ENCODE measurements at regions of chr11 and their contacts with region 1.

Region 1: DNA sequence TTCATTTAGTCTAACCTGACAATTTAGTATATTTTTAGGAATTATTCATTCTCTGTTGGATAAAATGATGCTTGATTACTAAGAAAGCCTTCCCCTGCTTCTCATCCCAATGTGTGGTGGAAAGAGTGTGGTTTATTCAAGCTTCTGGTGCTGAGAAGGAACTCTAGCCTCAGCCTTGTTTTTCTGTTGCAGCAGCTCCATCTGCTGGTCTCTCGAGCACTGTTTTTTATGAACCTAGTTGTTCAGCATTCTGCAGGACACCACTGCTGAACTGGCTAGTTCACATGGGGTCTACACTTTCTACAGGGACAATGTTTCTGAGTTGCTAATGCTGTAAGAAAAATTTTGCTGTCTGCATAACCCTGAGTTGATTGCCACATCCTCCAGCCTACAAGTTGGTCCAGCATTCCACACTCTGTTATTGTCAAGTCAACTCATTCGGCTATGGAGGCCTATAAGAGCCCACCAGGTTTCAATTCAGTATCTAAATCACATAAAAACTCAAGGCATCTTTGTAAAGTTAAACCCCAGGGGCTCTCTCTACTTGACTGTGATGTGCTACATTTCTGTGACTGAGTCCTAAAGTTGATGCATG is 14.3 kb downstream of the OR2AG2 start:
- DNase-seq: peak; percentile 70 to 78 (median 71)
- H3K4me3 ChIP-seq: no peak overlapping the region
- H3K27ac ChIP-seq: no peak overlapping the region
- H3K4me1 ChIP-seq: no peaks in the 10 kb centered on the region
- H3K27me3 ChIP-seq: no peaks in the 10 kb centered on the region

Region 2: DNA sequence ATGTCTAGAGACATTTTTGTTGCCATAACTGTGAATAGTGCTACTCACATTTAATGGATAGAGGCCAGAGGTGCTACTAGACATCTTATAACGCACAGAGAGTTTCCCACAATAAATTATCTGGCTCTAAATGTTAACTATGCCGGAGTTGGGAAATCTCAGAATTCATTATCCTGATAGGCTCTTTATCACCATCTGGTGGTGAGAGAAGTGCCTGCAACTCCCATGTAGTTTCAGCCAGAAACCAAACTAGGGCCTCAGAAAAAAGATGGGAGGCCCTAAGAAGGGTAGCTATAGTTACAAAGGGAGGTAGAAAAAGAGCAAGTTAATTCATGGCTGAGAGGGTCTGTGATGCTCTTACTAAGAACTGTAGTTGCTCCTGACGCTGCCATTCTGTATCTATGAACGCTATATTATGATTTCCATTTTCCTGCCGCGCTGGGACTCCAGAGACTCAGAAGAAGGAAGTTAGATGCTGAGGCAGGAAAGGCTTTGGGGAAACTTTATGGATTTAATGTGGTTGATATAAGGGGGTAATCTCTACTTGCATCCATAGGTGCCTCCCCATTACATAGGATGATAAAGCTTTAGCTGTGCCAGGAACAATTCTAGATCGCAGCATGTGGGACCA is 51.5 kb before region 1 on chr11:
- CTCF ChIA-PET with region 1: interaction called, 81 read pairs
- POLR2A ChIA-PET with region 1: no interaction called
- DNase-seq: peak; percentile 43 to 68 (median 57)
- H3K4me3 ChIP-seq: no peak overlapping the region
- H3K27ac ChIP-seq: no peak overlapping the region
- H3K4me1 ChIP-seq: peaks cover 0 to 2% (median 0%) of the 10 kb centered on the region in 4 experiments
- H3K27me3 ChIP-seq: no peaks in the 10 kb centered on the region

Region 3: DNA sequence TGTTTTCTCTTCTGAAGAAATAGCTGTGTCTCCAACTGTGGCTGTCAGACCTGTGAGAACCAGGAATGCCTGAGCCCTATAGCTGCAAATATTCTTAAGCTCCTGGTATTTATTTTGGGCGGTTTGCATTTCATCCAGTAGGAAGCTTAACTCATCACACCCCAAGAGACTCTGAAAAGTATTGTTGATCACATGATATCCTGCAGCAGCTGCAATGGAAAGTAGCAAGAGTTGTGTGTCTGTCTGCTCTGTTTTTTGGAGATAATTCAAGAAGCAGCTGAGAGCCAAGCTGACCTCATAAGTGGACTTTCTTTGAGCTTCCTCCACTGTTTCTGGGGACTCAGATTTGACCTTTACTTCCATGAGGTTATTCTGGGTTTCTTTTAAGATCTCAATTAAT is 37.9 kb before region 1 on chr11:
- CTCF ChIA-PET with region 1: interaction called, 24 read pairs
- POLR2A ChIA-PET with region 1: no interaction called
- DNase-seq: no peak
- H3K4me3 ChIP-seq: no peak overlapping the region
- H3K27ac ChIP-seq: no peak overlapping the region
- H3K4me1 ChIP-seq: no peaks in the 10 kb centered on the region
- H3K27me3 ChIP-seq: no peaks in the 10 kb centered on the region

Region 4: DNA sequence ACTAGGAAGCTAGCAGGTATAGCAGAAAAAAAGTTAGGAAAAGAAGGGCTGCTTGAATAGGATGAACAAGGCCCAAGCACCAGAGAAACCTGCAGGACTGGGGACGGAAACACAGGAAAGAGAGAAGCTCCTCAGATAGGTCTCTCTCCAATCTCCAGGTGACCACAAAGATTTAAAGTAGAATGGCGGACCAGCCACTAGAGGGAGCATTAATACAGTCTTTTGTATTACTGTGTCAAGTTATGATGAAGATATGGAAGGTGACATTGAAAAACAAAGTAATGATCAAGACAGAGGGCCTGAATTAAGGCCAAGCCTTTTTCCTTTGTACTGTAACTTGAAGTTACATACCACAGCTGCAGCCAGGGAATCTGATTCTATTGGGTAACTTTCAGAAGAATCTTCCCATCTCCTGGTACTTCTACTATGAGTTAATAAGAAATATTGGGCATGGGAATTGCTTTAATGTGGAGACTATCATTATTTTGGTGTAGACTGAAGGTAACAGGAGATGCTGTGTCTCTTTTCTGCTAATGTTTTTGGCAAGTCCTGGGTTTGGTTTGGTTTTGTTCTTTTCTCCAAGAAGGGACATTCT is 19.5 kb before region 1 on chr11:
- CTCF ChIA-PET with region 1: interaction called, 273 read pairs
- POLR2A ChIA-PET with region 1: no interaction called
- DNase-seq: peak; percentile 65 to 84 (median 81)
- H3K4me3 ChIP-seq: no peak overlapping the region
- H3K27ac ChIP-seq: no peak overlapping the region
- H3K4me1 ChIP-seq: peaks cover 7 to 29% (median 22%) of the 10 kb centered on the region in 4 experiments
- H3K27me3 ChIP-seq: no peaks in the 10 kb centered on the region

Region 5: DNA sequence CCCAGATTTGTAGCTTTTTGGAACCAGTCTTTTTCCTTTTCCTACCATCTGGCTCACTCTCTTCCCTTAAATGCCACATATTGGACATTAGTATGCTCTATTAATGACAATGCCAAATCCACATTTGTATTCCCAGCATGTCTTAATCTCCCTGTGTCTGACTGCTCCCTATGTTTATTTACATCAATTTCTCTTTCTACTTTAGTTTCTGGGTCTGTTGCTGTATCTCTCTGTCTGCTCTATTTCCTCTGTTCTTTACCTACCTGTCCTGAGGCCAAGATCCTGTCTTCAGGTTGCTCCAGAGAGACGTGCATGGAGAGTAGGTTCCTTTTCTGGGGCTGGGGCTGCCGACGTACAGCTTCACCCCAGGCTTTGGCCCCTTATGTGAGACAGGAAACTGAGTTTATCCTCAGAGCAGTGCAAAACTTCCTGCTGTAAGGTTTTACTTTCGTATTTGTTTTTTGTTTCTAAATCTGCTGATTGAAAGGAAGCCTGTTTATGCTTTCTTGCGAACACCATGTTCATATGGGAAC is 11.3 kb before region 1 on chr11:
- CTCF ChIA-PET with region 1: interaction called, 273 read pairs
- POLR2A ChIA-PET with region 1: no interaction called
- DNase-seq: peak; percentile 64 to 84 (median 76)
- H3K4me3 ChIP-seq: peak overlapping the region in 6 of 7 experiments; percentile 44 to 67 (median 59)
- H3K27ac ChIP-seq: peak overlapping the region; percentile 53 to 82
- H3K4me1 ChIP-seq: peaks cover 27 to 55% (median 36%) of the 10 kb centered on the region in 4 experiments
- H3K27me3 ChIP-seq: no peaks in the 10 kb centered on the region